ENCODE measurements at regions of chr10 and their contacts with region 1.

Region 1: GRCh38 chr10:120735773-120736371 is 115.3 kb upstream of the WDR11 start:
- DNase-seq: peak; percentile 37
- H3K4me3 Mint-ChIP-seq: no peak overlapping the region
- H3K27ac Mint-ChIP-seq: no peak overlapping the region
- H3K4me1 Mint-ChIP-seq: peaks cover 13% of the 10 kb centered on the region
- H3K27me3 Mint-ChIP-seq: peaks cover 45% of the 10 kb centered on the region
- CTCF ChIP-seq: peak; percentile 60

Region 2: DNA sequence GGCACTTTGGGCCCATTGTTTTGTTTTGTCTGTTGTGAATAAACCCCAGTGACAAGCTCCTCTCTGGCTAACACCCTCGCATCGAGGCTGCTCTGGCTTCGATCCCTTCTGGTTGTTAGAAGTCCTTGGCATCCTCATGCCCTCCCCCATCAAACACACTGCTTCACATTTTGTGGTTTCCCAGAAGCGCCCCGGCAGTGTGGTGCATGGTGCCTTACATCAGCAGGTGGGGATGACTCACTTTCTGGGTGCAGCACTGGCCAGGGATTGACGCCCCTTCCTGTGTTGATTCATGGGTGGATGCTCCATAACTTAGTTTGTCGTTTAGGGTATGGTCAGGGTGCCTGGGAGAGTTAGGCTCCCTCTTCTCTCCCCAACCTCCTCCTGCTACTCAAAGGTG is 227.5 kb before region 1 on chr10:
- CTCF ChIA-PET with region 1: interaction called, 4 read pairs
- POLR2A ChIA-PET with region 1: interaction called, 4 read pairs
- intact Hi-C with region 1: loop called (anchors 2 kb)
- DNase-seq: peak; percentile 97
- H3K4me3 Mint-ChIP-seq: peak overlapping the region; percentile 22
- H3K27ac Mint-ChIP-seq: peak overlapping the region; percentile 93
- H3K4me1 Mint-ChIP-seq: peaks cover 81% of the 10 kb centered on the region
- H3K27me3 Mint-ChIP-seq: no peaks in the 10 kb centered on the region
- CTCF ChIP-seq: no peak

Region 3: DNA sequence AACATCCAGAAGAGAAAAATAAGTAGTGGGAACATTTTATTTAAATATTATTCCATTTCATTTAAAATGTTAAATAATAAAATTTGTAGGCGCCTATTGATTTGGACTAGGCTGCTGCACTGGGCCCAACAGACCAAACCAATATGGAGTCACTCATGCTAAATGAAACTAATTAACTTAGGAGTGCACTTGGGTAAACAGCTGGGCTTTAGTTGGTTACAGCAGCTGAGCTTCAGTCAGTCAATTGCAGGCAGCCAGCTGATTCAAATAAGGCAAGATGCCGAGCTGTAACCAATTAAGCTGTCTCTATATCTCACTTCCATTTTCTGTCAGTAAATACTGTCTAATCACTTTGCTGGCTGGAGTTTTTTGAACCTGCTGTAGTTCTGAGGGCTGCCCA is 13.2 kb after region 1 on chr10:
- CTCF ChIA-PET with region 1: interaction called, 14 read pairs
- POLR2A ChIA-PET with region 1: interaction called, 5 read pairs
- intact Hi-C with region 1: no loop called
- DNase-seq: no peak
- H3K4me3 Mint-ChIP-seq: no peak overlapping the region
- H3K27ac Mint-ChIP-seq: no peak overlapping the region
- H3K4me1 Mint-ChIP-seq: no peaks in the 10 kb centered on the region
- H3K27me3 Mint-ChIP-seq: peaks cover 81% of the 10 kb centered on the region
- CTCF ChIP-seq: no peak

Region 4: DNA sequence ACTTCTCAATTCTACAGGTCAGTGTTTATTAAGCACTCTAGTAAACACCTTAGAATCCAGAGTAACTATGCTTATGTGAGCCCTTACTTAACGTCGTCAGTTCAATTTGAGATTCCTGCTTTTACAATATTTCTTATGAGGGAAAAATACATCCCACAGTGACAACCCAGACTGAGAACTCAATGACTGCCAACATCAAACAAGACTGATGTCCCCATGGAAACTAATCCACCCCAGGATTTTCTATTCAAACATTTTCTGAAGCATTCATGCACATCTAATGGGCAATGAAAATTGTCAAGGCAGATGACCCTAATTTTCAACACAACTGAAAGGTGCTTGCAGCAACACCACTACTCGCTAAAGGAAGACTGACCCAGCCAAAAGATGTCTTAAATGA is 1124.9 kb after region 1 on chr10:
- CTCF ChIA-PET with region 1: no interaction called
- POLR2A ChIA-PET with region 1: no interaction called
- intact Hi-C with region 1: no loop called
- DNase-seq: no peak
- H3K4me3 Mint-ChIP-seq: no peak overlapping the region
- H3K27ac Mint-ChIP-seq: no peak overlapping the region
- H3K4me1 Mint-ChIP-seq: no peaks in the 10 kb centered on the region
- H3K27me3 Mint-ChIP-seq: no peaks in the 10 kb centered on the region
- CTCF ChIP-seq: no peak